Heart right ventricle (tissue), 16 donors: ENCODE measurements at regions of chr2 and their contacts with region 1.

Region 1: GRCh38 chr2:82043867-82044266 is 1739.3 kb upstream of the LRRTM1 start:
- DNase-seq: no peak
- ATAC-seq: no peak
- H3K4me3 ChIP-seq: no peak overlapping the region
- H3K27ac ChIP-seq: no peak overlapping the region
- H3K4me1 ChIP-seq: no peaks in the 10 kb centered on the region
- H3K27me3 ChIP-seq: no peaks in the 10 kb centered on the region
- CTCF ChIP-seq: no peak

Region 2: DNA sequence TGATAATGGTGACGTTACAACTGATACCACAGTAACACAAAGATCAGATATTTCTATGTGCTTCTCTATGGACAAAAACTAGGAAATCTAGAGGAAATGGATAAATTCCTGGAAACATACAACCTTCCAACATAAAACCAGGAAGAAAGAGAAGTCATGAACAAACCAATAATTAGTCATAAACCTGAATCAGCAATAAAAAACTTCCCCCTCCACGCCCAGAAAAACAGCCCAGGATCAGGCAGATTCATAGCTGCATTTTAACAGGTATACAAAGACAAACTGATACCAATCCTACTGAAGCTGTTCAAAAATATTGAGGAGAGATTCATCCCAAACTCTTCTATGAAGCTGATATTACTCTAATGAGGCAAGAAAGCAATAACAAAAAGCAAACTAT is 204.1 kb before region 1 on chr2:
- intact Hi-C with region 1: no loop called
- DNase-seq: no peak
- ATAC-seq: no peak
- H3K4me3 ChIP-seq: no peak overlapping the region
- H3K27ac ChIP-seq: no peak overlapping the region
- H3K4me1 ChIP-seq: no peaks in the 10 kb centered on the region
- H3K27me3 ChIP-seq: no peaks in the 10 kb centered on the region
- CTCF ChIP-seq: no peak

Region 3: GRCh38 chr2:82109418-82109817 is 65.6 kb after region 1 on chr2:
- intact Hi-C with region 1: loop called in 1 of 10 experiments (anchors 10 kb)
- DNase-seq: no peak
- ATAC-seq: no peak
- H3K4me3 ChIP-seq: no peak overlapping the region
- H3K27ac ChIP-seq: no peak overlapping the region
- H3K4me1 ChIP-seq: no peaks in the 10 kb centered on the region
- H3K27me3 ChIP-seq: no peaks in the 10 kb centered on the region
- CTCF ChIP-seq: no peak